ENCODE measurements at regions of chr7 and their contacts with region 1.

Region 1: DNA sequence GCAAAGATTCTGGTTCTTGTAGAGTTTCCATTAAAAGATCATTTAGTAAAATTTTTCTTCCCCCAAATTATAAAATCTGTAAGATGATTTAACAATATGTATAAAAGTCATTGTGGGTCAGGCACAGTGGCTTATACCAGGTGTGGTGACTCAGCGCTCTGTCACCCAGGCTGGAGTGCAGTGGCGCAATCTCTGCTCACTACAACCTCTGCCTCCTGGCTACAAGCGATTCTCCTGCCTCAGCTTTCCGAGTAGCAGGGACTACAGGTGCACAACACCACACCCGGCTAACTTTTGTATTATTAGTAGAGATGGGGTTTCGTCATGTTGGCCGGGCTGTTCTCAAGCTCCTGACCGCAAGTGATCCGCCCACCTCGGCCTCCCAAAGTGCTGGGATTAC is 68.0 kb downstream of the SEPTIN14 start:
- DNase-seq: no peak
- ATAC-seq: no peak
- H3K4me3 ChIP-seq: no peak overlapping the region
- H3K4me3 Mint-ChIP-seq: no peak overlapping the region
- H3K27ac ChIP-seq: no peak overlapping the region
- H3K27ac Mint-ChIP-seq: no peak overlapping the region
- H3K4me1 ChIP-seq: no peaks in the 10 kb centered on the region
- H3K4me1 Mint-ChIP-seq: no peaks in the 10 kb centered on the region
- H3K27me3 ChIP-seq: peaks cover 0 to 12% of the 10 kb centered on the region in 2 experiments
- H3K27me3 Mint-ChIP-seq: peaks cover 0 to 4% of the 10 kb centered on the region in 2 donors

Region 2: GRCh38 chr7:55409482-55410225 is 384.9 kb before region 1 on chr7:
- CTCF ChIA-PET with region 1: interaction called in 1 of 2 experiments, 14 read pairs
- POLR2A ChIA-PET with region 1: no interaction called
- DNase-seq: no peak
- ATAC-seq: no peak
- H3K4me3 ChIP-seq: no peak overlapping the region
- H3K4me3 Mint-ChIP-seq: no peak overlapping the region
- H3K27ac ChIP-seq: no peak overlapping the region
- H3K27ac Mint-ChIP-seq: no peak overlapping the region
- H3K4me1 ChIP-seq: no peaks in the 10 kb centered on the region
- H3K4me1 Mint-ChIP-seq: no peaks in the 10 kb centered on the region
- H3K27me3 ChIP-seq: no peaks in the 10 kb centered on the region
- H3K27me3 Mint-ChIP-seq: no peaks in the 10 kb centered on the region

Measured in T-cell (primary cell).